HepG2 (cell line): ENCODE measurements at regions of chr5 and their contacts with region 1.

Region 1: GRCh38 chr5:6948562-6948961 is 235.3 kb downstream of the TENT4A start:
- DNase-seq: no peak
- ATAC-seq: no peak
- H3K4me3 ChIP-seq: no peak overlapping the region
- H3K27ac ChIP-seq: no peak overlapping the region
- H3K4me1 ChIP-seq: no peaks in the 10 kb centered on the region
- H3K27me3 ChIP-seq: no peaks in the 10 kb centered on the region
- CTCF ChIP-seq: no peak
- EP300 ChIP-seq: no peak
- POLR2A ChIP-seq: no peak
- RAD21 ChIP-seq: no peak

Region 2: GRCh38 chr5:6692906-6693305 is 255.7 kb before region 1 on chr5:
- CTCF ChIA-PET with region 1: no interaction called
- POLR2A ChIA-PET with region 1: no interaction called
- in situ Hi-C with region 1: no loop called
- intact Hi-C with region 1: no loop called
- DNase-seq: no peak
- ATAC-seq: no peak
- H3K4me3 ChIP-seq: no peak overlapping the region
- H3K27ac ChIP-seq: no peak overlapping the region
- H3K4me1 ChIP-seq: no peaks in the 10 kb centered on the region
- H3K27me3 ChIP-seq: no peaks in the 10 kb centered on the region
- CTCF ChIP-seq: no peak
- EP300 ChIP-seq: no peak
- POLR2A ChIP-seq: no peak
- RAD21 ChIP-seq: no peak

Region 3: DNA sequence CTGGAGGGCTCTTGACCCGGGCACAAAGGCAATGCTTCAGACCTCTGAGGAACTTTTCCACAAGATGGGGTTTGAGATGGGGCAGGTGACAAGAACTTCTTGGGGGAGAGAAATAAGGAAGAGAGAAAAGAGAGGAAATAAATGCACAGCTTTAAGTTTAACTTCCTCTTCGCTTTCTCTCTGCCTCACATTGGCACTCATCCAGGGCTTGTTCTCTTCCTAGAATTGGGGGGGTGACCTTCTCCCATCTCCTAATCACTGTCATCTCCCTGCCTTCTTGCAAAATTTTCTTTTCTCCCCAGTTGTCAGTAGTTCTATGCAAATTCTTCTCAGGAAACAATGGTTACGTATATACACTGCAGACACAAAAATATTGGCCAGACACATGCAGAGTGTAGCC is 428.3 kb after region 1 on chr5:
- CTCF ChIA-PET with region 1: no interaction called
- POLR2A ChIA-PET with region 1: no interaction called
- in situ Hi-C with region 1: no loop called
- intact Hi-C with region 1: loop called (anchors 5 kb)
- DNase-seq: no peak
- ATAC-seq: no peak
- H3K4me3 ChIP-seq: no peak overlapping the region
- H3K27ac ChIP-seq: no peak overlapping the region
- H3K4me1 ChIP-seq: no peaks in the 10 kb centered on the region
- H3K27me3 ChIP-seq: no peaks in the 10 kb centered on the region
- CTCF ChIP-seq: no peak
- EP300 ChIP-seq: no peak
- POLR2A ChIP-seq: no peak
- RAD21 ChIP-seq: no peak